A549 (cell line): ENCODE measurements at regions of chr15 and their contacts with region 1.

Region 1: DNA sequence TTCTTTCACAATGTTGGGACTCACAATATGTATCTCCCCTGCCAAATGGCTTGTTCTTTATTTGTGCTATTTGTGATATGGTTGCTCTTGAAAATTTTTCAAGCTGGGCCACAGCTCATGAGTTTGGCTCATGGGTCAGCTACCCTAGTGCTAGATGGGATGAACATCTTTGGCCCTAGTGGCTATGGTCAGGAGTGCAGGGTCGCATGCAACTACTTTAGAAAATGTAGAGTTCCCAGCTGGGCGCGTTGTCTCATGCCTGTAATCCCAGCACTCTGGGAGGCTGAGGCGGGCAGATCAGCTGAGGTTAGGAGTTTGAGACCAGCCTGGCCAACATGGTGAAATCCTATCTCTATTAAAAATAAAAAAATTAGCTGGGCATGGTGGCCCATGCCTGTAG is 55.8 kb downstream of the POLR2M start:
- DNase-seq: no peak
- ATAC-seq: peak in 1 of 2 experiments; percentile 72; a peak in 3 of 6 replicates
- H3K4me3 ChIP-seq: no peak overlapping the region
- H3K27ac ChIP-seq: no peak overlapping the region
- H3K4me1 ChIP-seq: no peaks in the 10 kb centered on the region
- CTCF ChIP-seq: no peak
- EP300 ChIP-seq: no peak
- POLR2A ChIP-seq: no peak
- RAD21 ChIP-seq: no peak

Region 2: GRCh38 chr15:57751177-57751800 is 11.0 kb before region 1 on chr15:
- CTCF ChIA-PET with region 1: interaction called, 19 read pairs
- POLR2A ChIA-PET with region 1: no interaction called
- DNase-seq: peak; percentile 29 to 50
- ATAC-seq: peak; percentile 65 to 85; a peak in 4 of 6 replicates
- H3K4me3 ChIP-seq: no peak overlapping the region
- H3K27ac ChIP-seq: no peak overlapping the region
- H3K4me1 ChIP-seq: no peaks in the 10 kb centered on the region
- CTCF ChIP-seq: peak; percentile 63
- EP300 ChIP-seq: no peak
- POLR2A ChIP-seq: no peak
- RAD21 ChIP-seq: peak; percentile 71 to 76